Heart left ventricle (tissue), 16 donors: ENCODE measurements at regions of chr22 and their contacts with region 1.

Region 1: GRCh38 chr22:43826142-43827002 is 14.3 kb upstream of the EFCAB6 start:
- DNase-seq: peak in 1 of 5 donors; percentile 25
- ATAC-seq: no peak
- H3K4me3 ChIP-seq: no peak overlapping the region
- H3K27ac ChIP-seq: peak overlapping the region in 1 of 12 donors; percentile 1
- H3K4me1 ChIP-seq: peaks cover 0 to 28% (median 18%) of the 10 kb centered on the region in 12 donors
- H3K27me3 ChIP-seq: peaks cover 0 to 22% (median 0%) of the 10 kb centered on the region in 9 donors
- CTCF ChIP-seq: peak in 8 of 12 donors; percentile 7 to 41 (median 27)
- POLR2A ChIP-seq: no peak

Region 2: GRCh38 chr22:43230971-43231723 is 595.2 kb before region 1 on chr22:
- intact Hi-C with region 1: loop called in 1 of 10 experiments (anchors 10 kb)
- DNase-seq: peak; percentile 43 to 78 (median 50)
- ATAC-seq: peak in 3 of 4 donors; percentile 18 to 39 (median 29)
- H3K4me3 ChIP-seq: no peak overlapping the region
- H3K27ac ChIP-seq: no peak overlapping the region
- H3K4me1 ChIP-seq: peaks cover 0 to 13% (median 1%) of the 10 kb centered on the region in 12 donors
- H3K27me3 ChIP-seq: peaks cover 0 to 10% (median 0%) of the 10 kb centered on the region in 9 donors
- CTCF ChIP-seq: peak; percentile 80 to 95 (median 90)
- POLR2A ChIP-seq: no peak

Region 3: GRCh38 chr22:43399338-43399979 is 426.9 kb before region 1 on chr22:
- intact Hi-C with region 1: loop called in 1 of 10 experiments (anchors 10 kb)
- DNase-seq: peak in 2 of 5 donors; percentile 13 to 35
- ATAC-seq: no peak
- H3K4me3 ChIP-seq: no peak overlapping the region
- H3K27ac ChIP-seq: no peak overlapping the region
- H3K4me1 ChIP-seq: no peaks in the 10 kb centered on the region
- H3K27me3 ChIP-seq: peaks cover 0 to 14% (median 0%) of the 10 kb centered on the region in 9 donors
- CTCF ChIP-seq: no peak
- POLR2A ChIP-seq: no peak

Region 4: DNA sequence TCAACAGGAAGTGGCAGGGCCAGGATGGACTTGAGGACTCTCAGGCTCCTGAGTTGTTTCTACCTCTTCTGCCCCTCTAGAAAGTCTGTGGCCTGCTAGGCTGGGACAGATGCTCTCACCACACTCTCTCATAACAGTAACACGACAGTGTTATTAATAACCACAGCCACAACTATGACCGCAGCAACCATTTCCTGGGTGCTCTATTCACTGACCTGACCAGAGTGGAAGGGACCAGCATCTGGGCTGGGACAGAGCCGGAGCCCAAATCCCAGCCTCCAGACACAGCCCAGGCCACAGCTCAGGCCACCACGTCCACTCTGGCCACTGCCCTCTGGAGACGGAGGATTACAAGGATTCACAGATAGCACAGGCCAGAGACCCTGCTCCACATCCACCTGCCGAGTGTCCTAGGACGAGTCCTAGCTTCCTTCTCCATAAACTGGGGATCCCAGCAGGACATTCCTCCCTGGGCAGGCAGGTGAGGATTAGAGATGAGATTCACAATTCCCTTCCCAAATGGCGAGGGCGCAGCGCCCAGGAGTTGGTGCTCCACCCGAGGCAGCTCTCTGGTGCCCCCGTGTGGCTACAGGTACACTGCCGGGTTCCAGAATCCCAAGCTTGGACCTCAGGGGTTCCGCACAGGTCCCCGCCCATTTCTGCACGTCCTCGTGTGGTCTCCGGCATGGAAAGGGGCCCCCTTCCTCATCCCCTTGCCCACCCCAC is 58.4 kb after region 1 on chr22:
- intact Hi-C with region 1: loop called in 1 of 10 experiments (anchors 5 kb)
- DNase-seq: peak; percentile 35 to 78 (median 58)
- ATAC-seq: peak in 3 of 4 donors; percentile 54 to 62 (median 59)
- H3K4me3 ChIP-seq: no peak overlapping the region
- H3K27ac ChIP-seq: no peak overlapping the region
- H3K4me1 ChIP-seq: no peaks in the 10 kb centered on the region
- H3K27me3 ChIP-seq: peaks cover 2 to 51% (median 13%) of the 10 kb centered on the region in 9 donors
- CTCF ChIP-seq: peak; percentile 54 to 83 (median 76)
- POLR2A ChIP-seq: no peak

Region 5: DNA sequence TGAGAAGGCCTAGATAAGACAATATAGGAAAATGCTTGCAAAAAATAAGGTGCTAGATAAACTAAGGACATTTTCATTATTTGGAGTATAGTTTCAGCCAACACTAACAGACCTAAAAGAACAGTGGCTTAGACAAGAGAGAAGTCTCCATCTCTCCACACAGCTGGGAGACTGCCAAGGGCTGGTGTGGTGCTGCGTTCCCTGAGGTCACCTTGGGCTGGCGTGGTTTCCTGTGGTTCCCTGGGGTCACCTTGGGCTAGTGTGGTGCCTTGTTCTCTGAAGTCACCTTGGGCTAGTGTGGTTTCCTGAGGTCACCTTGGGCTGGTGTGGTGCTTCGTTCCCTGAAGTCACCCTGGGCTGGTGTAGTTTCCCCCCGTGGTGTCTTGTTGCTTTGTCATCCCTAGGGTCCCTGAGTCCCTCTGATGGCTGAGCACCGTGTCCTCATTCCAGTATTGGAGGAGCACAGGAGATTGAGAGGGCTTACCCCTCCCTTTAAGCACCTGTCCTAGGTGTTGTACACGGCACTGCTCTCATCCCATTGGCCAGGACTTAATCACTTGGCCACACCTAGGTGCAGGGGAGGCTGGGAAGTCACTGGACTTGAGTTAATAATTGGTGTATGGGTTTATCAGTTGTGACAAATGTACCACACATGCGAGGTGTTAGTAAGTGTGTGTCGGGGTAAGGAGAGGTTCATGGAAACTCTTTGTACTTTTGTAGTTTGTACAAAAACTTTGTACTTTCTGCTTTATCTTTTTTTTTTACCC is 143.8 kb after region 1 on chr22:
- intact Hi-C with region 1: no loop called
- DNase-seq: no peak
- ATAC-seq: peak in 1 of 4 donors; percentile 26
- H3K4me3 ChIP-seq: no peak overlapping the region
- H3K27ac ChIP-seq: no peak overlapping the region
- H3K4me1 ChIP-seq: no peaks in the 10 kb centered on the region
- H3K27me3 ChIP-seq: no peaks in the 10 kb centered on the region
- CTCF ChIP-seq: no peak
- POLR2A ChIP-seq: no peak